GM13977 (cell line): ENCODE measurements at regions of chr5 and their contacts with region 1.

Region 1: GRCh38 chr5:143403593-143404415 is at the start of gene NR3C1:
- DNase-seq: peak; percentile 84
- CTCF ChIP-seq: peak; percentile 72

Region 2: DNA sequence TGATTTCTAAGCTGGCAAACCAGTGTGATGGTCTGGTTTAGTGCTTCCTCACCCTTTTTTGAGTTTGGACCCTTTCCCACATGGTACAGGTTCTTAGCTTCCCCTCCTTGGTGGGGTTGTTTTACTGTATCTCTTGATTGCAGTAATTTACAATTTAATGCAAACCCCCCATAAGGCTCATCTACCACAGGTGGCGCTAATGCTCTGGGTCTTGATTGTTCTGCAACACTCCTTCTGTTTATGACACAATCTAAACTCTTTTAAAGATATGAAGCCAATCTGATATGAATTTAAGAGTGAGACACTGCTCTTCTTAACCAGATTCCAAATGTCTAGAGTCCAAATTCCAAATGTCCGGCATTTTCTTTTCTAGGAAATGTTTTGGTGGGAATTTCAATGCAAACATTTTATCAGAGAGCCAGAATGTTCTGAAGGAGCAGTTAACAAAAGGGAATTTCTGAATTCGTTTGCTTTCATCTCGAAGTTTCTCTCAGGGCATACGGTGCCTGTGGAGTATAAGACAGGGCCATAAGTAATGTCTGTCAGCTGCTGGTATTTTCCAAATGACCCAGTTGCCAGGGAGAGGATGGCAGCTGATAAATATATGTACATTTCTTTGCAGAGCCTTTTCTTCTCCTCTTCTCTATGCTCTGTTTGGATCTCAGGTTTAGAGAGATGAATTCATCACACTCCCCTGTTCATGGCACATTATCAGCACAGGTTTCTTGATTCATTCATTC is 386.9 kb before region 1 on chr5:
- in situ Hi-C with region 1: loop called (anchors 10 kb)
- DNase-seq: no peak
- CTCF ChIP-seq: peak; percentile 68

Region 3: GRCh38 chr5:143824851-143825720 is 421.3 kb after region 1 on chr5:
- in situ Hi-C with region 1: loop called (anchors 25 kb)
- DNase-seq: peak; percentile 56
- CTCF ChIP-seq: peak; percentile 94